Aorta (tissue), 5 donors: ENCODE measurements at regions of chrX and their contacts with region 1.

Region 1: GRCh38 chrX:102515975-102516941 is at the start of gene TMSB15A:
- DNase-seq: peak; percentile 78 to 92
- ATAC-seq: peak; percentile 86
- H3K4me3 ChIP-seq: peak within 1 kb of the TSS in 1 of 2 donors; percentile 26
- H3K27ac ChIP-seq: peak within 1 kb of the TSS in 1 of 2 donors; percentile 52
- H3K4me1 ChIP-seq: no peaks in the 10 kb centered on the region
- H3K27me3 ChIP-seq: no peaks in the 10 kb centered on the region
- total RNA-seq, gene TMSB15A: 0.55 to 1.2 TPM

Region 2: DNA sequence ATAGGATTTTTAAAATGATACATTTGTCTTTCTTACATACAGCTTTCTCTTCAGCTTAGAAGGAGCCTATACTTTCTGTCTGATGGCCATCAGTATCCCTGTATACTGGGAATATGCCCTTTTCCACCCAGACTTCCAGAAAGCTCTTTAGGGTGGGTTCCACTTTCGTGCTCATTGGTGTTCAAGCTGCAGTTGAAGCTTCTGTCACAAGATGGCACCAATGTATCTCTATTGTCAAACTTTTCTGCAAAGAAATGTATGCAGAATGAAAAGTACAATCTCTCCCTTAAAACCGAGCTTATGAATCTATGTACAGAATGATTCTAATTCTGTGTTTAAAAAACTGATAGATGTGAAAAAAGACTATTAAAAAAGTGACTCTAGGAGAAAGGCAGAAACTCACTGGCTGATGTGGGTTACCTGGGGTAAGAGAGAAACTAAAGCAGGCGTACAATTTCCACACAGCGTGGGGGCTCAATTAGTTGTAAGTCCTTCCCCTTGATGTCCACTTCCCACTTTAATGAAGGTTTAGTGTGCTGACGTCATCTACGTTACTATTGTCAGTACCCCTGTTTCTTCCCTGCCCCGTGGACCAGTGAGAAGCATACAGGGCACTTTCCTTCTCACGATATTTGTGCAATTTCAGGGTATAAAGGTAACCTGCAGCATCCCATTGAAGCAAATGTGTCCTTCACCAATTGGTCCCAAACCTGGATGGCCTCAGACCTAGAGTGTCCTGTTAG is 448.1 kb before region 1 on chrX:
- intact Hi-C with region 1: loop called in 1 of 2 experiments (anchors 5 kb)
- DNase-seq: no peak
- ATAC-seq: no peak
- H3K4me3 ChIP-seq: no peak overlapping the region
- H3K27ac ChIP-seq: no peak overlapping the region
- H3K4me1 ChIP-seq: no peaks in the 10 kb centered on the region
- H3K27me3 ChIP-seq: no peaks in the 10 kb centered on the region

Region 3: GRCh38 chrX:102155806-102156179 is 360.5 kb before region 1 on chrX and contains the start of gene BEX5:
- intact Hi-C with region 1: loop called in 1 of 2 experiments (anchors 10 kb)
- DNase-seq: peak; percentile 69 to 83
- ATAC-seq: peak; percentile 91
- H3K4me3 ChIP-seq: peak within 1 kb of the TSS; percentile 24 to 65
- H3K27ac ChIP-seq: peak within 1 kb of the TSS in 1 of 2 donors; percentile 31
- H3K4me1 ChIP-seq: no peaks in the 10 kb centered on the region
- H3K27me3 ChIP-seq: no peaks in the 10 kb centered on the region
- total RNA-seq, gene BEX5: 5.0 to 7.7 TPM

Region 4: GRCh38 chrX:102745857-102746584 is 229.8 kb after region 1 on chrX:
- intact Hi-C with region 1: loop called in 1 of 2 experiments (anchors 10 kb)
- DNase-seq: peak; percentile 59 to 83
- ATAC-seq: peak; percentile 79
- H3K4me3 ChIP-seq: peak overlapping the region; percentile 2 to 49
- H3K27ac ChIP-seq: no peak overlapping the region
- H3K4me1 ChIP-seq: no peaks in the 10 kb centered on the region
- H3K27me3 ChIP-seq: no peaks in the 10 kb centered on the region

Region 5: DNA sequence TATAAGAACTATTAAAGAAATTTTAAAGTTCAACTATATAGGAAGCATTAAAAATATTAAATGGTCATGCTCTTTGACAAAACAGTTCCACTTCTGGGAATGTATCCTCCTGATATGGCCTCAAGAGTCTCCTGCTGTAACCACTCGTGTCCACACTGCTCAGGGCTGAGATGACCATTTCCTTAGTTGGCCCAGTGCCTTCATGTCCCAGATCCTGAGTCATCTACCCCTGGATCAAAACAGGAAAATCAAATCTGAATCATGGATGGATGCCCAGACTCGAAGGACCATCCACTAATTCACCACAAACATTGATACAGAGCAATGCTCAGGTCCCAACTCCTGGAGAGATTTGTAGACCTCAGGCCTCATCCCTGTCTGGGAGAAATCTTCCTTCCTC is 249.0 kb after region 1 on chrX:
- intact Hi-C with region 1: no loop called
- DNase-seq: peak in 1 of 2 donors; percentile 48
- ATAC-seq: no peak
- H3K4me3 ChIP-seq: no peak overlapping the region
- H3K27ac ChIP-seq: no peak overlapping the region
- H3K4me1 ChIP-seq: peaks cover 0 to 3% of the 10 kb centered on the region in 2 donors
- H3K27me3 ChIP-seq: no peaks in the 10 kb centered on the region